Activated CD4-positive, alpha-beta T cell treated with anti-CD3 and anti-CD28 coated beads for 36 hours (primary cell): ENCODE measurements at regions of chr1 and their contacts with region 1.

Region 1: DNA sequence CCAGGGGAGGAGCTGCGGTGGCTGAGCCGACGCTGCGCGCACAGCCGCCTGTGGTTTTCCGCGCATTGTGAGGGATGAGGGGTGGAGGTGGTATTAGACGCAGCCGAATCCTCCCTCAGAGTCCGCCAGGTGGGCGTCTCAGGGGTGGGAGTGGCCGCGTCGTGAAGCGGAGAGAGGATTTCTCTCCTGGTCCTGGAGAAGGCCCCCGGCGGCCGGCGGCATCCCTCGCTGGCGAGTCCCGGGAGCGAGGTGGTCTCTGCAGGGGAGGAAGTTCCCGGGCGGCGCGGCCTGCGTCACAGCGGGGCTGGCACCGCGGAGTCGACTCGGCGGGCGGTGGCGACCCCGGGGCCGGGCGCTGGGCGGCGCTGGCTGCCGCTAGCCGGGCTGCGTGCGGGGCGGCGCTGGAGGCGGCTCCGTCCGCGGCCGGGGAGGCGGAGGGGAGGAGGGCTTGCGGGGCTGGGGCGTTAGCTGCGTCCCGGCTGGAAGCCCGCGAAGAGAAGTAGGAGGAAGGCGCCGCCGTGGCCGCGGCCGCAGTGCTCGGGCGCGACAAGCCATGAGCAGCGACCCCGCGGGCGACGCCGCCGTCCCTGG is at the start of gene LRRC8C:
- DNase-seq: peak; percentile 93
- ATAC-seq: peak; percentile 77
- H3K4me3 Mint-ChIP-seq: peak within 1 kb of the TSS; percentile 96
- H3K27ac Mint-ChIP-seq: peak within 1 kb of the TSS; percentile 98
- H3K4me1 Mint-ChIP-seq: peaks cover 66% of the 10 kb centered on the region
- H3K27me3 Mint-ChIP-seq: no peaks in the 10 kb centered on the region
- total RNA-seq, gene LRRC8C: 31.5 to 37.1 TPM

Region 2: GRCh38 chr1:89524369-89525168 is 108.2 kb before region 1 on chr1 and contains the start of gene LRRC8B:
- CTCF ChIA-PET with region 1: no interaction called
- POLR2A ChIA-PET with region 1: no interaction called
- intact Hi-C with region 1: loop called in 1 of 2 experiments (anchors 1 kb)
- DNase-seq: peak; percentile 94
- ATAC-seq: peak; percentile 71
- H3K4me3 Mint-ChIP-seq: no peak within 1 kb of the TSS
- H3K27ac Mint-ChIP-seq: no peak within 1 kb of the TSS
- H3K4me1 Mint-ChIP-seq: peaks cover 24% of the 10 kb centered on the region
- H3K27me3 Mint-ChIP-seq: no peaks in the 10 kb centered on the region
- total RNA-seq, gene LRRC8B: 38.9 to 41.5 TPM

Region 3: GRCh38 chr1:89615676-89616598 is 16.8 kb before region 1 on chr1:
- CTCF ChIA-PET with region 1: interaction called, 73 read pairs
- POLR2A ChIA-PET with region 1: interaction called, 28 read pairs
- intact Hi-C with region 1: loop called (anchors 1 to 2 kb)
- DNase-seq: peak; percentile 46
- ATAC-seq: no peak
- H3K4me3 Mint-ChIP-seq: no peak overlapping the region
- H3K27ac Mint-ChIP-seq: no peak overlapping the region
- H3K4me1 Mint-ChIP-seq: peaks cover 86% of the 10 kb centered on the region
- H3K27me3 Mint-ChIP-seq: no peaks in the 10 kb centered on the region

Region 4: GRCh38 chr1:89692601-89693521 is 60.1 kb after region 1 on chr1:
- CTCF ChIA-PET with region 1: no interaction called
- POLR2A ChIA-PET with region 1: no interaction called
- intact Hi-C with region 1: loop called in 1 of 2 experiments (anchors 5 kb)
- DNase-seq: no peak
- ATAC-seq: no peak
- H3K4me3 Mint-ChIP-seq: no peak overlapping the region
- H3K27ac Mint-ChIP-seq: peak overlapping the region; percentile 74
- H3K4me1 Mint-ChIP-seq: peaks cover 94% of the 10 kb centered on the region
- H3K27me3 Mint-ChIP-seq: no peaks in the 10 kb centered on the region

Region 5: DNA sequence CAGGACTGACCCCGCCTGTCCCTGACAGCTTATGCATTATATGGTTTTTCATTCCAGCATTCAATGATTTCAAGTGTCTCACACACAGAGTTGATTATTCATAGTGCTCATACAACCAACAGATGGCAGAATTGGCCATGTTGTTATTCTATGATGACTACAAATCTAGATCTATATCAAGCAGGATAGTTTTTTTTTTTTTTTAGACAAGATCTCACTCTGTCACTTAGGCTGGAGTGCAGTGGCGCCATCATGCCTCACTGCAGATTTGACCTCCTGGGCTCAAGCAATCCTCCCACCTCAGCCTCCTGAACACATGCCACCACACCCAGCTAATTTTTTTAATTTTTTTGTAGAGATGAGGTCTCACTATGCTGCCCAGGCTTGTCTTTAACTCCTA is 148.0 kb after region 1 on chr1:
- CTCF ChIA-PET with region 1: interaction called, 6 read pairs
- POLR2A ChIA-PET with region 1: interaction called, 3 read pairs
- intact Hi-C with region 1: loop called (anchors 1 to 5 kb)
- DNase-seq: peak; percentile 59
- ATAC-seq: peak; percentile 73
- H3K4me3 Mint-ChIP-seq: peak overlapping the region; percentile 48
- H3K27ac Mint-ChIP-seq: peak overlapping the region; percentile 86
- H3K4me1 Mint-ChIP-seq: peaks cover 44% of the 10 kb centered on the region
- H3K27me3 Mint-ChIP-seq: no peaks in the 10 kb centered on the region

Region 6: GRCh38 chr1:89987170-89987819 is 354.5 kb after region 1 on chr1:
- CTCF ChIA-PET with region 1: no interaction called
- POLR2A ChIA-PET with region 1: no interaction called
- intact Hi-C with region 1: loop called in 1 of 2 experiments (anchors 2 kb)
- DNase-seq: peak; percentile 54
- ATAC-seq: peak; percentile 90
- H3K4me3 Mint-ChIP-seq: no peak overlapping the region
- H3K27ac Mint-ChIP-seq: no peak overlapping the region
- H3K4me1 Mint-ChIP-seq: peaks cover 11% of the 10 kb centered on the region
- H3K27me3 Mint-ChIP-seq: peaks cover 2% of the 10 kb centered on the region